HCT116 (cell line): ENCODE measurements at regions of chrX and their contacts with region 1.

Region 1: GRCh38 chrX:85851418-85851817 is 195.9 kb downstream of the CHM start:
- DNase-seq: peak; percentile 8
- ATAC-seq: peak; percentile 63
- H3K4me3 ChIP-seq: no peak overlapping the region
- H3K27ac ChIP-seq: no peak overlapping the region
- H3K4me1 ChIP-seq: no peaks in the 10 kb centered on the region
- H3K27me3 ChIP-seq: no peaks in the 10 kb centered on the region
- CTCF ChIP-seq: peak; percentile 43 to 56 (median 54); a peak in 5 of 6 replicates
- POLR2A ChIP-seq: no peak
- RAD21 ChIP-seq: peak; percentile 55

Region 2: GRCh38 chrX:86066997-86067396 is 215.6 kb after region 1 on chrX:
- CTCF ChIA-PET with region 1: no interaction called
- POLR2A ChIA-PET with region 1: no interaction called
- RAD21 ChIA-PET with region 1: interaction called in 1 of 2 experiments, 3 read pairs
- intact Hi-C with region 1: loop called (anchors 2 kb)
- DNase-seq: no peak
- ATAC-seq: peak; percentile 66
- H3K4me3 ChIP-seq: no peak overlapping the region
- H3K27ac ChIP-seq: no peak overlapping the region
- H3K4me1 ChIP-seq: no peaks in the 10 kb centered on the region
- H3K27me3 ChIP-seq: no peaks in the 10 kb centered on the region
- CTCF ChIP-seq: peak in 2 of 3 experiments; percentile 2 to 29; a peak in 2 of 6 replicates
- POLR2A ChIP-seq: no peak
- RAD21 ChIP-seq: peak; percentile 34